K562 (cell line): ENCODE measurements at regions of chr1 and their contacts with region 1.

Region 1: GRCh38 chr1:175033953-175034352 is 10.7 kb upstream of the MRPS14 start:
- DNase-seq: no peak
- ATAC-seq: no peak
- H3K4me3 ChIP-seq: no peak overlapping the region
- H3K27ac ChIP-seq: no peak overlapping the region
- H3K4me1 ChIP-seq: peaks cover 0 to 5% of the 10 kb centered on the region in 2 experiments; a peak in 2 of 5 replicates
- H3K27me3 ChIP-seq: peaks cover 32 to 37% of the 10 kb centered on the region in 2 experiments
- CTCF ChIP-seq: no peak
- EP300 ChIP-seq: no peak
- POLR2A ChIP-seq: no peak
- RAD21 ChIP-seq: no peak

Region 2: GRCh38 chr1:175124861-175125260 is 90.9 kb after region 1 on chr1:
- CTCF ChIA-PET with region 1: interaction called, 29 read pairs
- POLR2A ChIA-PET with region 1: interaction called, 4 read pairs
- in situ Hi-C with region 1: no loop called
- intact Hi-C with region 1: loop called (anchors 1 kb)
- DNase-seq: no peak
- ATAC-seq: no peak
- H3K4me3 ChIP-seq: no peak overlapping the region
- H3K27ac ChIP-seq: no peak overlapping the region
- H3K4me1 ChIP-seq: no peaks in the 10 kb centered on the region; a peak in 1 of 5 replicates
- H3K27me3 ChIP-seq: peaks cover 15 to 29% of the 10 kb centered on the region in 2 experiments
- CTCF ChIP-seq: no peak
- EP300 ChIP-seq: no peak
- POLR2A ChIP-seq: no peak
- RAD21 ChIP-seq: no peak

Region 3: DNA sequence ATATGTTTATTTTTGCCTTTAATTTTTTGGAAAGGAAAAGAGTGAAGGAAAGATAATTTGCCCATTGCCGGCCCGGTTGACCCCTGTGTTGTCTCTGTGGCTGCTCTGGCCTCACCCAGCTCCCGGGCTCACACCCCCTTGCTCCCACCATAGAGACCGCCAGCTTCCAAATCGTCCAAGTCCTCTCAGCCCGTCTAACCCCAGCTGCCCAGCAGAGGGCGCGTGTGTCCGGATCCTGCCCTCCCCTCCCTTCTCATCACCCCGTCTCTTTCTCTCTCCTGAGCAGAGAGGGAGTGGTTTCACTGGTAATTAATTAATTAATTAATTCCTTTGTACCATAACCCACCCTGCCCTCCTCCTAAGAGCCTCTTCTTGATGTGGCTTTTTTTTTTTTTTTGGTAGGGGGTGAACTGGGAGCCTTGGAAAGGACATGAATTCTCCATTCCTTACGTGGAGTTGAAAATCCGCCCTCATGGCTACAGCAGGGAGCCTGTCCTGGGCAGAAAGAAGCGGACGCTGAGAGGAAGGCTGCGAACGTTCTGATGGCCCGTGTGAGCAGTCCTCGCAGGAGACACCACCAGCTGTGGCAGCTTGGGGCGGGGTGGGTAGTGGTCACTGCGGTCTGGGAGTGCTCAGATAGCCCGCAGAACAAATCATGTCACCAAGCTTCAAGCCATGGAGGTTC is 112.7 kb after region 1 on chr1:
- CTCF ChIA-PET with region 1: interaction called, 3 read pairs
- POLR2A ChIA-PET with region 1: interaction called, 3 read pairs
- in situ Hi-C with region 1: no loop called
- intact Hi-C with region 1: loop called (anchors 1 kb)
- DNase-seq: peak; percentile 83 to 89 (median 86)
- ATAC-seq: peak; percentile 98
- H3K4me3 ChIP-seq: no peak overlapping the region
- H3K27ac ChIP-seq: no peak overlapping the region
- H3K4me1 ChIP-seq: peaks cover 0 to 5% of the 10 kb centered on the region in 2 experiments; a peak in 1 of 5 replicates
- H3K27me3 ChIP-seq: peaks cover 15 to 55% of the 10 kb centered on the region in 2 experiments
- CTCF ChIP-seq: peak; percentile 88 to 95 (median 89)
- EP300 ChIP-seq: no peak
- POLR2A ChIP-seq: no peak
- RAD21 ChIP-seq: peak; percentile 46 to 61

Region 4: DNA sequence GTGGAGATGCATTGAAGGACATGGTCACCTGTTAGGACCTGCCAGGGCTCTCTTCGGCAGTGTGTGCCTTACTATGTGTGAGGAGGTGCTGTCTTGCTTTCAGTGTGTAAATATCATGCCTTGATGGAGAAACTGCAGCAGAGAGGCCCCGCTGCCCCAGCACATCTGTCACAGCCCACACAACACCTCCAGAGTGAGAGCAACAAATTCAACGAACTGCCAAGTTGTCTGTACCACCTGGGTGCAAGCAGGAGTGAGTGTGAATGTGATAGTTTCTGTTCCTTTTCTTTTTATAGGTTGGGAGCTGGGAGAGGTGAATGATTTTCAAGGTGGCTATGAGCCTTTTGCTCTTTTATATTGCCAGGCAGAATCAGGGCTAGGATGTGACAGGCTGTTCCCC is 273.2 kb after region 1 on chr1:
- CTCF ChIA-PET with region 1: no interaction called
- POLR2A ChIA-PET with region 1: no interaction called
- in situ Hi-C with region 1: loop called (anchors 5 kb)
- intact Hi-C with region 1: no loop called
- DNase-seq: no peak
- ATAC-seq: no peak
- H3K4me3 ChIP-seq: no peak overlapping the region
- H3K27ac ChIP-seq: no peak overlapping the region
- H3K4me1 ChIP-seq: no peaks in the 10 kb centered on the region
- H3K27me3 ChIP-seq: peaks cover 26 to 27% of the 10 kb centered on the region in 2 experiments
- CTCF ChIP-seq: no peak
- EP300 ChIP-seq: no peak
- POLR2A ChIP-seq: no peak
- RAD21 ChIP-seq: no peak

Region 5: DNA sequence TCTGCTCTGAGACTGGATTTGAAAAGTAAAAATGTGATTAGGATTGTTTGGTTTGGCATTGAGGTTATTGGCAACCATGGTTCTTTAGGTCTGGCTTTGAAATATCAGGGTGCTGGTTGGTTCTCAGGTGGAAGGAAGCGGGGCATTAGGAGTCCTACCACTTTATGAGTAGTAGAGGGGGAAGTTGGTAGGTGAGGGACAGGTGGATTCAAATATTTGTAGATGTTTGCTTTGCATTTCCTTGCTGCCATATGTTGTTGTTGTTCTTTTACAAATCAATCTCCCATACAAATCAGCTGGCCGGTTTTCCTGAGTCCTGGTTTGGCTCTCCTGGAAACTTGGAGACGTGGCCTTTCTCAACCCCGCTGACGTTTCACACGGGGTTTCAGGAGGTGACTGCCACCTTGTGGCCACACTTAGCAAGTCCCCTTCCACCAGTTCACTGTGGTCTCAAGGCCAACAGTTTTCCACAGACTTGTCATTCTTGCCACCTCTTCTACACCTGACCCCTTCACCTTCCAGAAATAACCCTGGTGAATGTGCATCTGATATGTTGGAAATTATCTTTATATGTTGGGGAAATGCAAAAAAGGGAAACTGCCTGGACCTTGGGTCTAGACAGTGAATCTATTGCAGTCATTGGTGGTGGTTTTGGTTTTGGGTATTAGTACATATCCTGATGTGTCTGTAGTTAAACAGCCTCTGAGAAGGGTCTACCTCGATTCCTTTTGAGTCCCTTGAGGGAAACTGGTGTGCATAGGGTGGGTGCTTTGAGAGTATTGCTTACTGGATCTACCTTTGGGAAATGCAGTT is 285.7 kb after region 1 on chr1:
- CTCF ChIA-PET with region 1: interaction called, 5 read pairs
- POLR2A ChIA-PET with region 1: no interaction called
- in situ Hi-C with region 1: no loop called
- intact Hi-C with region 1: loop called (anchors 1 kb)
- DNase-seq: peak; percentile 79 to 88 (median 82)
- ATAC-seq: peak; percentile 97
- H3K4me3 ChIP-seq: no peak overlapping the region
- H3K27ac ChIP-seq: no peak overlapping the region
- H3K4me1 ChIP-seq: no peaks in the 10 kb centered on the region
- H3K27me3 ChIP-seq: peaks cover 6 to 22% of the 10 kb centered on the region in 2 experiments; a peak in 3 of 5 replicates
- CTCF ChIP-seq: peak; percentile 84 to 96 (median 94)
- EP300 ChIP-seq: no peak
- POLR2A ChIP-seq: no peak
- RAD21 ChIP-seq: peak; percentile 95 to 97